Activated CD4-positive, alpha-beta T cell treated with anti-CD3 and anti-CD28 coated beads for 36 hours (primary cell): ENCODE measurements at regions of chr2 and their contacts with region 1.

Region 1: GRCh38 chr2:219597552-219598307 is at the start of gene STK11IP:
- DNase-seq: peak; percentile 95
- ATAC-seq: peak; percentile 91
- H3K4me3 Mint-ChIP-seq: peak within 1 kb of the TSS; percentile 82
- H3K27ac Mint-ChIP-seq: peak within 1 kb of the TSS; percentile 97
- H3K4me1 Mint-ChIP-seq: peaks cover 16% of the 10 kb centered on the region
- H3K27me3 Mint-ChIP-seq: peaks cover 4% of the 10 kb centered on the region
- total RNA-seq, gene STK11IP: 23.5 to 26.1 TPM

Region 2: DNA sequence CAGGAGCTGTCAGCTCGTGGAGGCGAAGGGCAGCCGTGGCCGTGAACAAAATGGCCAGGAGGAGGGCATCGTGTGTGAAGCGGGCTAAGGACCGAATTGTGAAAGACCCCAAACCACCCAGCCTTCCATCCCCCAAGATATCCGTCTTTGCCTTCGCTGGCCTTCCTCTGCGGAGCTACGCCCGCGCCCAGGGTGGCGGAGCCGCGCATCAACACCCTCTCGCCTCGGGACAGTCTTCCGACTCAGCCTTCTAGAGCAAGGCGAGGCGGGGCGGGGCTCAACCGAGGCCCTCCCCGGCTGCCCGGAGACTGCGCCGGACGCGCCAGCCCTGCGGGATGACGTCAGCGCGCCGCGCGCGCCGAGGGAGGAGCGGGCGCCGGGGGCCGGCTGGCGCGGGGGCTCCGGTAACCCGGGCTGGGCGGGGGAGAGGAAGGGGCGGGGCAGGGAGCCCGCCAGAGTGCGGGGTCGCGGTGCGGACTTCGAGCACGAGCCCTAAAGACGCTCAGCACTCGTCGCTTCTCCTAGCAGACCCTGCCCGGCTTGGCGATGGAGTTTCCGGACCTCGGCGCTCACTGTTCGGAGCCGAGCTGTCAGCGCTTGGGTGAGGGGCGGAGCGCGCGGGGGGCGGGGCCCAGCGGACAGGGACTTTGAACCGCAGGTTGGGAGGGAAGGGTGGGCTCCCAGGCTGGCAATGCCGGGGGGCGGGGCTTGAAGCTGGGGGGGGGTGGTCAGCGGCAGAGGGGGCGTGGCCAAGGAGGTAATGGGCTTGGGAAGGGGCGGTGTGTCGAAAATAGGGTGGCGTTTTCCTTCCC is 391.1 kb before region 1 on chr2 and contains the start of gene ZFAND2B:
- CTCF ChIA-PET with region 1: no interaction called
- POLR2A ChIA-PET with region 1: no interaction called
- intact Hi-C with region 1: loop called in 1 of 2 experiments (anchors 1 kb)
- DNase-seq: peak; percentile 98
- ATAC-seq: peak; percentile 96
- H3K4me3 Mint-ChIP-seq: peak within 1 kb of the TSS; percentile 86
- H3K27ac Mint-ChIP-seq: peak within 1 kb of the TSS; percentile 94
- H3K4me1 Mint-ChIP-seq: peaks cover 34% of the 10 kb centered on the region
- H3K27me3 Mint-ChIP-seq: no peaks in the 10 kb centered on the region
- total RNA-seq, gene ZFAND2B: 21.5 to 27.6 TPM

Region 3: GRCh38 chr2:219278655-219279516 is 318.8 kb before region 1 on chr2 and contains the start of gene DNAJB2:
- CTCF ChIA-PET with region 1: no interaction called
- POLR2A ChIA-PET with region 1: no interaction called
- intact Hi-C with region 1: loop called in 1 of 2 experiments (anchors 1 kb)
- DNase-seq: peak; percentile 100
- ATAC-seq: peak; percentile 86
- H3K4me3 Mint-ChIP-seq: peak within 1 kb of the TSS; percentile 96
- H3K27ac Mint-ChIP-seq: peak within 1 kb of the TSS; percentile 95
- H3K4me1 Mint-ChIP-seq: peaks cover 37% of the 10 kb centered on the region
- H3K27me3 Mint-ChIP-seq: no peaks in the 10 kb centered on the region
- total RNA-seq, gene DNAJB2: 51.8 to 62.8 TPM

Region 4: DNA sequence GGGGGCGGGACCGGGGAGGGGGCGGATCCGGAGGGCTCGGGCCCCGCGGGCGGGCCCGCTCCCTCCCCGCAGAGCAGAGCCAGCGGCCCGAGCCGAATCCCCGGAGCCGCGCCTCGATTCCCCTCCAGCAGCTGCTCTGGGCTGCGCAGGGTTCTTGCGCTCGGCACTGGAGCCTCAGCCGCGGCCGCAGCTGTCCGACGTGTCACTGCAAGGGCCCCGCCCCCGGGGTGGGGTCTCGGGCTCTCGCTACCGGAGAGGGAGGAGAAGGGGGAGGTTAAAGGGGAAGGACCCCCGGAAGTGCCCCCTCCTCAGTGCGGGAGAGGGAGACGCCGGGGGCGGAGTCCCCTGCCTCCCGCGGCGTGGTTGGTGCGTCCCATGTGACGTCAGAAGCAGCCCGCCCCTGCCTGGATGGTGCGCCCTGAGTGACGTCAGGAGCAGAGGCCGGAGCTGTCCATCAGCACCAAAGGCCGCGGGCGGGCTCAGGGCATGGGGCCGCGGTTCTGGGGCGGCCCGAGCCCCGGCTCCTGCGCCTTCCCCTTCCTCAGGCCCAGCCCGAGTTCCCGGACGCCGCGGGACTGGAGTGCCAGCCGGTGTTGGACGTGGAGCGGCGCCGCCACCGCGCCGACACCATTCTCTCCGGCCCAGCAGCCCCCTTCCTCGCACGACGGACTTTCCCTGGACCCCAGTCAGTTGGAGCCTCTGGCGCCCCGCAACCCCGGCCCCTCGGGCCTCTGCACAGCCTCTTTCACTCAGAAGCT is 54.0 kb before region 1 on chr2 and contains the starts of genes CHPF and TMEM198:
- CTCF ChIA-PET with region 1: interaction called, 29 read pairs
- POLR2A ChIA-PET with region 1: no interaction called
- intact Hi-C with region 1: loop called (anchors 1 kb)
- DNase-seq: peak; percentile 98
- ATAC-seq: peak; percentile 85
- H3K4me3 Mint-ChIP-seq: peak within 1 kb of the TSS; percentile 87
- H3K27ac Mint-ChIP-seq: peak within 1 kb of the TSS; percentile 66
- H3K4me1 Mint-ChIP-seq: peaks cover 22% of the 10 kb centered on the region
- H3K27me3 Mint-ChIP-seq: no peaks in the 10 kb centered on the region
- total RNA-seq, gene CHPF: 14.1 to 17.1 TPM
- total RNA-seq, gene TMEM198: 2.4 to 2.7 TPM

Region 5: GRCh38 chr2:219560037-219560892 is 37.5 kb before region 1 on chr2:
- CTCF ChIA-PET with region 1: interaction called, 18 read pairs
- POLR2A ChIA-PET with region 1: no interaction called
- intact Hi-C with region 1: no loop called
- DNase-seq: peak; percentile 48
- ATAC-seq: peak; percentile 70
- H3K4me3 Mint-ChIP-seq: no peak overlapping the region
- H3K27ac Mint-ChIP-seq: no peak overlapping the region
- H3K4me1 Mint-ChIP-seq: no peaks in the 10 kb centered on the region
- H3K27me3 Mint-ChIP-seq: peaks cover 6% of the 10 kb centered on the region

Region 6: DNA sequence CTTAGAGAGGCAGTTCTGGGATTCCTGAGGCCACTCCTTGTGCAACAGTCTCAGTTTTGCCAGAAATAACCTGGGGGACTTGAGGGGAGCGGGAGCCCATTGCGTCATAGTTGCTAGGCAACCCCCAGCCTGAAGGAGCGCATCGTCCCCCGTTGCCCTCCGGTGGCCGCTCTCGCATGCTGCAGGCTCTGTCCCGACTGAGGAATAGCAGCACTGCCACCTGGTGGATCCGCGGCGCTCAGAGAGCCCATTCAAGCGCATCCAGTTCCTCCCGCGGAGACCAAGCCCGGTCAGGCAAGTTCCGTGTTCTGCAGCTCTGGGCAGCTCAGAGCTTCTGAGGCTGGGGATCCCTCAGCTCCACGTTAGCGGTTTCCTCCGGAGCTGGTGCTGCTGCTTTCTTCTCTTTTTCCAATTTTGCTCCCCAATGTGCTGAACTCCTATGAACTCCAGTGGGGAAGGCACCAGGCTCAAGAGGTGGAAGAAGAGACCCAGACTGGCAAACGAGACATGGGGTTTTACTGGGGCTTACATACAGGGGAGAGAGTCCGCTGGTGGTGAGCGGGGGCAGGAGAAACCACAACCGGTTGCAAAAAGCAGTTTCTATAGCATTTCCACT is 44.8 kb after region 1 on chr2:
- CTCF ChIA-PET with region 1: interaction called, 5 read pairs
- POLR2A ChIA-PET with region 1: no interaction called
- intact Hi-C with region 1: loop called in 1 of 2 experiments (anchors 1 kb)
- DNase-seq: peak; percentile 96
- ATAC-seq: peak; percentile 100
- H3K4me3 Mint-ChIP-seq: no peak overlapping the region
- H3K27ac Mint-ChIP-seq: no peak overlapping the region
- H3K4me1 Mint-ChIP-seq: peaks cover 8% of the 10 kb centered on the region
- H3K27me3 Mint-ChIP-seq: peaks cover 6% of the 10 kb centered on the region